AG04449 (cell line): ENCODE measurements at regions of chr15 and their contacts with region 1.

Region 1: DNA sequence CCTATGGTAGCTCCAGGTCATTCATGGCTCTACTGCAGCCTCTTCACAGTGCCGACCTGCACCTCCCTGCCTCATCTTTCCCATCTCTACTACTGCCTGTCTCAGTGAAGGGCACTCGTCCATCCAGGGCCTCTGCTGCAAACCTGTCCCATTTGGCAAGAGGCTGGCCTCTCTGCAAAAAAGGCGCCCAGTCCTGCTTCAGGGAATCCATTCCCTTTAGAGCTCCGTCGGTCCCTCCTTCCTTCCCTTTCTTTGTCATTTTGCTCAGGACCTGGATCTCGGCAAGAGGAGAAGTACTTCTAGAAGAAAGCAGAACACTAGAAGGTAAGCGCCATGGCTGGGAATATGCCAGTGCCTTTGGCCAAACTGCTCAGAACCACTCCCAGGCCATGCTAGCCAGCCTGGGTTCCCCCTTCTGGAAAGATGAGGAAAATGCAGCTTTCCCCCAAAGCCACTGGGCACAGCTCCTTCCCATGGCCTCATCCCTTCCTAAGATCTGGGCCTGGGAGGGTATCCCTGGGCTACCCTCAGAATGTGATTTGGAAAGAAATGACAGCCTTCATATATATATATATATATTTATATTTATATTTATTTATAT is 6.4 kb upstream of the ISL2 start:
- DNase-seq: no peak
- H3K4me3 ChIP-seq: no peak overlapping the region
- CTCF ChIP-seq: peak; percentile 76

Region 2: DNA sequence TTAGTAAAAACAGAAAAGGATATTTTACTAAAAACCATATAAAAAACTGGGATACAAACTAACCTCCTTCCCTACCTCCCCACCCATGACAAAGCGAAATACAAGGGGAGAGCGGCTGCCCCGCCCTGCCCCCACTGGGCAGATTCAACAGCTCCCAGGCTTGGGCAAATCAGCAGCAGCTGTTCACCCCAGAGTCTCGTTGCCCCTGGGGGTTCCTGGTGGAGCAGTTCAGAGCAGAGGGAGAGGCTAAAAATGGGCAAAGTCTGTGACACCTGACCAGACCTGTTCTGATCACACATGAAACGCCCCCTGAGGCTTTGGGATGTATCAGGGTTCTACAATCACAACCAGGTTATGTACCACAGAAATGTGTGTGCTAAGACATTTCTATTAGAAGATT is 16.4 kb before region 1 on chr15:
- CTCF ChIA-PET with region 1: interaction called, 16 read pairs
- POLR2A ChIA-PET with region 1: no interaction called
- DNase-seq: no peak
- H3K4me3 ChIP-seq: no peak overlapping the region
- CTCF ChIP-seq: no peak